CD8-positive, alpha-beta memory T cell (primary cell): ENCODE measurements at regions of chr13 and their contacts with region 1.

Region 1: GRCh38 chr13:102620516-102620915 is 23.7 kb downstream of the TPP2 start:
- DNase-seq: no peak
- H3K4me3 ChIP-seq: no peak overlapping the region
- H3K4me3 Mint-ChIP-seq: no peak overlapping the region
- H3K27ac ChIP-seq: no peak overlapping the region
- H3K27ac Mint-ChIP-seq: peak overlapping the region in 2 of 8 donors; percentile 65 to 78
- H3K4me1 ChIP-seq: no peaks in the 10 kb centered on the region
- H3K4me1 Mint-ChIP-seq: peaks cover 10 to 22% (median 13%) of the 10 kb centered on the region in 3 donors
- H3K27me3 ChIP-seq: no peaks in the 10 kb centered on the region
- H3K27me3 Mint-ChIP-seq: no peaks in the 10 kb centered on the region

Region 2: DNA sequence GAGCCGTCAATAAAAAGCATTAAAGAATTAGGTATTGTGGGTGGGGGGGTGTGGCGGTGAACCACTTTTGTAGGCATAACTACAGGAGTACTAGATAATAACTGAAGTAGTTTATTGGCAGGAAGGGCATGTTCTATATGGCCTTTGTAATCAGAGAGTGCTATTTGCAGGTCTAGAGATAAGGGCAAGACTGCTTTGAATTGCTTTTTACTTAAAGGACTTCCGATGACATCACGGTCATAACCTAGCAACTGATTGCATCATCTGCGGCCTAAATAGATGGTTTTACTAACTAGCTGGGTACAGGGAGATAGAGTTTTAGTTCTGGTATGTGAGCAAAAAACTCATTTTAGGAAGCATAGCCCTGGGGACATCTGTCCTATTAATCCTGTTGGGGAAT is 49.6 kb after region 1 on chr13:
- CTCF ChIA-PET with region 1: no interaction called
- POLR2A ChIA-PET with region 1: no interaction called
- DNase-seq: no peak
- H3K4me3 ChIP-seq: no peak overlapping the region
- H3K4me3 Mint-ChIP-seq: no peak overlapping the region
- H3K27ac ChIP-seq: no peak overlapping the region
- H3K27ac Mint-ChIP-seq: peak overlapping the region in 3 of 8 donors; percentile 3 to 41 (median 12)
- H3K4me1 ChIP-seq: no peaks in the 10 kb centered on the region
- H3K4me1 Mint-ChIP-seq: no peaks in the 10 kb centered on the region
- H3K27me3 ChIP-seq: no peaks in the 10 kb centered on the region
- H3K27me3 Mint-ChIP-seq: no peaks in the 10 kb centered on the region

Region 3: GRCh38 chr13:102742101-102742500 is 121.6 kb after region 1 on chr13:
- CTCF ChIA-PET with region 1: no interaction called
- POLR2A ChIA-PET with region 1: interaction called, 10 read pairs
- DNase-seq: no peak
- H3K4me3 ChIP-seq: no peak overlapping the region
- H3K4me3 Mint-ChIP-seq: no peak overlapping the region
- H3K27ac ChIP-seq: no peak overlapping the region
- H3K27ac Mint-ChIP-seq: no peak overlapping the region
- H3K4me1 ChIP-seq: no peaks in the 10 kb centered on the region
- H3K4me1 Mint-ChIP-seq: no peaks in the 10 kb centered on the region
- H3K27me3 ChIP-seq: peaks cover 8% of the 10 kb centered on the region
- H3K27me3 Mint-ChIP-seq: peaks cover 11 to 38% of the 10 kb centered on the region in 2 donors

Region 4: DNA sequence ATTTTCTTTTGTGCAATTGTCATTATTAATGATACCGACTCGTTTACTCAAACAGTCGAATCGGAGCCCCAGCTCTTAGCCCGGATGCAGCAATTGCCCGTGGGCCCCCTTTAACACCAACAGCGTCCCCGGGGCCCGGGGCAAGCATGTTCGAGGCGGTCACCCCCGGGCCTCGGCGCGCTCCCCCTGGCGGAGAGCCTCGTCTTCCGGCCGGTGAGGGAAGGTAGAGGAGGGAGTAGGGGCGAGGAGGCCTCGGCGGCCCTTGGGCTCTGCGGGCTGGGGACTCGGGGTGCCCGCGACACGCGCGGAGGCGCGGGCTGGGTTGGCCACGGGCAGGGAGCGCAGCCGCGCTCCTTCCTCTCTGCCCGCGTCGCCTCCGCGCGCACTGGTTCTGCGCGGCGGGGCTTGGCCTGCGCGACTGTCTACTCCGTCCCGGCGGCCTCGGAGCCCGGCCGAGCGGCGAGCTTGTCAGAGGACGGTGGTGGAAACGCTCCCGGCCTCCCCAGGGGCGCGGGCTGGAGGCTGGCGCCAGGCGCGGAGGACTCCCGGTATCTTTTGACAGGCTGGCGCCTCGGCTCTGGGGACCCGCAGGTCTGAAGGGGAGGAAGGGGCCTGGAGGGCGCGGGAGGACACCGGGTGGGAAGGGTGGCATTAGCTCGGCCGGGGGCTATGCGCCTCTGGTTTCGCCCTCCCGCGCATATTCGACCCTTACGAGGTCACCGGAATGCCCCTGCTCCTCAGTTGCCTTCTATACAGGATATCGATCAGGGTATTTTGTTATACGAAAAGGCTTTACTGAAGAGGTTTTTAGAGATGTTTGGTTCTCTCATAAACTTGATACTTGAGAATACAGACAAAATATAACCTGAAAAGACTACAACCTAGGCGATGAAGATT is 179.9 kb after region 1 on chr13:
- CTCF ChIA-PET with region 1: no interaction called
- POLR2A ChIA-PET with region 1: no interaction called
- DNase-seq: peak; percentile 73 to 88 (median 80)
- H3K4me3 ChIP-seq: peak overlapping the region; percentile 67
- H3K4me3 Mint-ChIP-seq: peak overlapping the region; percentile 89 to 98 (median 96)
- H3K27ac ChIP-seq: peak overlapping the region; percentile 61
- H3K27ac Mint-ChIP-seq: peak overlapping the region; percentile 59 to 95 (median 78)
- H3K4me1 ChIP-seq: peaks cover 6% of the 10 kb centered on the region
- H3K4me1 Mint-ChIP-seq: peaks cover 28 to 49% (median 45%) of the 10 kb centered on the region in 3 donors
- H3K27me3 ChIP-seq: no peaks in the 10 kb centered on the region
- H3K27me3 Mint-ChIP-seq: peaks cover 0 to 4% of the 10 kb centered on the region in 2 donors